ENCODE measurements at regions of chr9 and their contacts with region 1.

Region 1: DNA sequence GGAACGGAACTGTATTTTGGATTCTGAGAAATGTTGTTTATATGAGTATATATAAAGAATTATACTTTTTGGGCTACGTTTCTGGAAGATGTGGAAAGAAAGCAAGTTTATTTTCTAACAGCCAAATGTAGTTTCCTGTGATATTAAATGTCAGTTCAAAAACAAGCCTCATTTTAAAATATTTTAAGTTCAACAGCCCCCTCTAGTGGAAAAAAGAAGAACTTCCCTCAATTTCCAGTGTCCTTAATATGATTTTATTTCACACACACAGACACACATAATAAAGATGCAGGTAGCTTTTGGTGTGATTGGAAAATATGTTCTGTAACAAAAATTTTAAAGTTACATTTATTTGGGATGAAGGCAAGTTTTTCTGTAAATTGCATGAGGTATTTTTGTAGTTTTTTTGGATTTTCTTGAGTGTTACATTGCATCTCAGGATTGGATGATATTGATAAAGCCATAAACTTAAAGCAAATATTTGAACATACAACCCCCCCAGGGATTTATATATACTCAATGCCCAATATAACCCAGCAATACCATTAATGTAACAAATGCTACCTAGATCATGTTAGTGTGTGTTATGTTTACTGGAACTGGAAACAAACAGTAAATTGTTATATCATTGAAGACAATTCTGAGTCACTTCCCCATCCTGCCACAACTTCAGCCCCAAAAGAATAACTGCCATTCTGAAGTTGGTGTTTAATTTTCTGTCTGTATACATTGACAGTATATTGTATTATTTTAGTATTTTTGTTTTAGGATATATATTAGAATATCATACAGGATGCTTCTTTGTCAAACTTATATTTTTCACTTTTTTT is 54.0 kb downstream of the CCDC171 start:
- DNase-seq: peak in 1 of 2 donors; percentile 67
- ATAC-seq: peak in 2 of 3 donors; percentile 46 to 50
- H3K4me3 ChIP-seq: no peak overlapping the region
- H3K4me3 Mint-ChIP-seq: no peak overlapping the region
- H3K27ac ChIP-seq: no peak overlapping the region
- H3K27ac Mint-ChIP-seq: no peak overlapping the region
- H3K4me1 ChIP-seq: no peaks in the 10 kb centered on the region
- H3K4me1 Mint-ChIP-seq: no peaks in the 10 kb centered on the region
- H3K27me3 ChIP-seq: no peaks in the 10 kb centered on the region
- H3K27me3 Mint-ChIP-seq: no peaks in the 10 kb centered on the region
- CTCF ChIP-seq: peak; percentile 87

Region 2: GRCh38 chr9:15104826-15105420 is 501.9 kb before region 1 on chr9:
- intact Hi-C with region 1: loop called (anchors 1 kb)
- DNase-seq: peak in 1 of 2 donors; percentile 67
- ATAC-seq: peak; percentile 46 to 72 (median 53)
- H3K4me3 ChIP-seq: no peak overlapping the region
- H3K4me3 Mint-ChIP-seq: no peak overlapping the region
- H3K27ac ChIP-seq: no peak overlapping the region
- H3K27ac Mint-ChIP-seq: no peak overlapping the region
- H3K4me1 ChIP-seq: no peaks in the 10 kb centered on the region
- H3K4me1 Mint-ChIP-seq: no peaks in the 10 kb centered on the region
- H3K27me3 ChIP-seq: no peaks in the 10 kb centered on the region
- H3K27me3 Mint-ChIP-seq: peaks cover 11 to 23% of the 10 kb centered on the region in 2 donors
- CTCF ChIP-seq: peak; percentile 62

Region 3: GRCh38 chr9:15211160-15211814 is 395.6 kb before region 1 on chr9:
- intact Hi-C with region 1: loop called (anchors 1 kb)
- DNase-seq: peak; percentile 23 to 80
- ATAC-seq: peak in 2 of 3 donors; percentile 64 to 68
- H3K4me3 ChIP-seq: no peak overlapping the region
- H3K4me3 Mint-ChIP-seq: no peak overlapping the region
- H3K27ac ChIP-seq: no peak overlapping the region
- H3K27ac Mint-ChIP-seq: no peak overlapping the region
- H3K4me1 ChIP-seq: no peaks in the 10 kb centered on the region
- H3K4me1 Mint-ChIP-seq: peaks cover 9 to 22% of the 10 kb centered on the region in 2 donors
- H3K27me3 ChIP-seq: no peaks in the 10 kb centered on the region
- H3K27me3 Mint-ChIP-seq: no peaks in the 10 kb centered on the region
- CTCF ChIP-seq: peak; percentile 91

Region 4: GRCh38 chr9:15277400-15278090 is 329.3 kb before region 1 on chr9:
- intact Hi-C with region 1: loop called (anchors 5 kb)
- DNase-seq: peak in 1 of 2 donors; percentile 63
- ATAC-seq: peak in 2 of 3 donors; percentile 52 to 65
- H3K4me3 ChIP-seq: no peak overlapping the region
- H3K4me3 Mint-ChIP-seq: no peak overlapping the region
- H3K27ac ChIP-seq: no peak overlapping the region
- H3K27ac Mint-ChIP-seq: peak overlapping the region; percentile 42 to 58
- H3K4me1 ChIP-seq: peaks cover 6% of the 10 kb centered on the region
- H3K4me1 Mint-ChIP-seq: peaks cover 37 to 62% of the 10 kb centered on the region in 2 donors
- H3K27me3 ChIP-seq: no peaks in the 10 kb centered on the region
- H3K27me3 Mint-ChIP-seq: no peaks in the 10 kb centered on the region
- CTCF ChIP-seq: peak; percentile 46

Region 5: DNA sequence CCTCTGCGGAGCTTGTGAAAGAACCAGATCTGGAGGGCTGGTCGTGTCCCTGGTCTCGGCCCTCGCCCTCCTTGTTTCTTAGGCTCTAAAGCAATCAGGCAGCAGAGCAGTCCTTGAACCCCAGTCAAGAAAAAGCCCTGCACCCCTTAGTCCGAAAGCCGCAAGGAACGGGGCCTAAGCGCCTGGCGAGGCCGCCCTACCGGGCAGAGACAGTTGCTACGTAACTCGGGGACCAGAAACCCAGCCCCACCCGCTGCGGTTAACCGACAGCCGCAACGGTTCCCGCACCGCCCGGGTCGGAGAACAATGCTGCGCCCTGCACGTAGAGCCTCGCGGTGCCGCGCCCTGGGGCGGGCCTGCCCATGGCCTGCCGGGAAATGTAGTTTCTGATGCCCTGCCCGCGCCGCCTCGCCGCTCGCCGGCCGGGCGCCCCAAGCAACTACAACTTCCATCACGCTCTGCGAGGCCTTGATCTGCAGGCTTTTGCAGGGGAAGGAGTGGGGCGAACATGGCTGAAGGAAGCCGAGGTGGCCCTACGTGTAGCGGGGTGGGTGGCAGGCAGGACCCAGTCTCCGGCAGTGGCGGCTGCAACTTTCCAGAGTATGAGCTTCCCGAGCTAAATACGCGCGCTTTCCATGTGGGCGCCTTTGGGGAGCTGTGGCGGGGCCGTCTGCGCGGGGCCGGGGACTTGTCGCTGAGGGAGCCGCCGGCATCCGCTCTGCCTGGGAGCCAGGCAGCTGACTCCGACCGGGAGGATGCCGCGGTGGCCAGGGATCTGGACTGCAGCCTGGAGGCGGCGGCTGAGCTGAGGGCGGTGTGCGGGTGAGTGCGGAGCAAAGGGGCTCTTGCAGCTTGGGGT is 184.3 kb before region 1 on chr9 and contains the start of gene SNAPC3:
- intact Hi-C with region 1: loop called (anchors 10 kb)
- DNase-seq: peak; percentile 86 to 95
- ATAC-seq: peak; percentile 97 to 100 (median 98)
- H3K4me3 ChIP-seq: peak within 1 kb of the TSS; percentile 89
- H3K4me3 Mint-ChIP-seq: peak within 1 kb of the TSS; percentile 90
- H3K27ac ChIP-seq: peak within 1 kb of the TSS; percentile 69
- H3K27ac Mint-ChIP-seq: peak within 1 kb of the TSS; percentile 86 to 88
- H3K4me1 ChIP-seq: peaks cover 24% of the 10 kb centered on the region
- H3K4me1 Mint-ChIP-seq: peaks cover 32 to 41% of the 10 kb centered on the region in 2 donors
- H3K27me3 ChIP-seq: no peaks in the 10 kb centered on the region
- H3K27me3 Mint-ChIP-seq: no peaks in the 10 kb centered on the region
- CTCF ChIP-seq: no peak
- total RNA-seq, gene SNAPC3: 18.5 to 22.2 (median 19.2) TPM

Region 6: GRCh38 chr9:15475923-15476536 is 130.8 kb before region 1 on chr9:
- intact Hi-C with region 1: loop called (anchors 5 kb)
- DNase-seq: no peak
- ATAC-seq: no peak
- H3K4me3 ChIP-seq: no peak overlapping the region
- H3K4me3 Mint-ChIP-seq: no peak overlapping the region
- H3K27ac ChIP-seq: no peak overlapping the region
- H3K27ac Mint-ChIP-seq: peak overlapping the region in 1 of 2 donors; percentile 51
- H3K4me1 ChIP-seq: no peaks in the 10 kb centered on the region
- H3K4me1 Mint-ChIP-seq: peaks cover 0 to 5% of the 10 kb centered on the region in 2 donors
- H3K27me3 ChIP-seq: no peaks in the 10 kb centered on the region
- H3K27me3 Mint-ChIP-seq: no peaks in the 10 kb centered on the region
- CTCF ChIP-seq: no peak

Measured in natural killer cell (primary cell).